Caco-2 (cell line): ENCODE measurements at regions of chr7 and their contacts with region 1.

Region 1: DNA sequence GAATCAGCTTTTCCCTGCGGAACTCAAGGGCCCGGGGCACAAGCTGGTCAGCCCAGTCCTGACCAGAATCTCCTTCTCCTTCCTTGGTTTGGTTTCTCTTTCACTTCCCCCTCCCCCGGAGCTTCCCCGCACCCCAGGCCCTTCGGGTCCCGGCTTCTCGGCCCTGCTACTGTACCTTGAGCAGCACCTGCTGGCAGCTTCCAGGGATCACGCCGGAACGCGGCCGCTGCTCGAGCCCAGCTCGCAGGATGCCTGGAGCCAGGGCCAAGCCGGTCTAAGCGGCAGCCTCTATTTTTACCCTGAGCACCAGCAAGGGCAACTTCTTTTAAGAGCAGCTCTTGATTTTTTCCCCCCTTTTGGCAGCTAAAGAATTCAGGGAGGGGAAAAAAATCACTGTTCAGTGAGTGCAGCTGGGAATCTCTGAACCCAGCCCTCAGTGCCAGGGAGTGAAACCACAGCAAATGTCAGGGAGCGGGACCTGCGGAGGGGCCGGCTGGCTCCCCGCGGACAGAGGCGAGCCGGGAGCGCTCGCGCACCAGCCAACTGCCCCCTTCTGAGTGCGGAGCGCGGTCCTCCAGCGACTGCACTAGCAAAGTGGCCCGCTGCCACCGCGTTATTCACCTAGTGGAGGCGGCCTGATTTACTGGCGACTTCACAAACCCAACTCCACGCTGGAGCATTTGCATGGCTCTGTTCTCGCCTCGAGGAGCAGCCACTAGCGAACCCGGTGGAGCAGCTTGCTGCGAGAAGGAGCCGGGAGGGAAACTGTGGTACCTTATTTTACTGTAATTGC is 2.4 kb upstream of the INHBA start:
- DNase-seq: peak; percentile 90 to 91
- H3K4me3 ChIP-seq: peak overlapping the region; percentile 43
- H3K4me3 Mint-ChIP-seq: peak overlapping the region; percentile 78
- H3K27ac Mint-ChIP-seq: no peak overlapping the region
- H3K4me1 ChIP-seq: no peaks in the 10 kb centered on the region
- H3K4me1 Mint-ChIP-seq: peaks cover 14% of the 10 kb centered on the region
- H3K27me3 ChIP-seq: no peaks in the 10 kb centered on the region
- H3K27me3 Mint-ChIP-seq: peaks cover 3% of the 10 kb centered on the region
- CTCF ChIP-seq: peak; percentile 79 to 94

Region 2: GRCh38 chr7:41003031-41003925 is 702.0 kb before region 1 on chr7:
- CTCF ChIA-PET with region 1: interaction called, 5 read pairs
- POLR2A ChIA-PET with region 1: no interaction called
- intact Hi-C with region 1: loop called (anchors 2 kb)
- DNase-seq: peak; percentile 69 to 75
- H3K4me3 ChIP-seq: no peak overlapping the region
- H3K4me3 Mint-ChIP-seq: peak overlapping the region; percentile 45
- H3K27ac Mint-ChIP-seq: peak overlapping the region; percentile 88
- H3K4me1 ChIP-seq: peaks cover 36% of the 10 kb centered on the region
- H3K4me1 Mint-ChIP-seq: peaks cover 23% of the 10 kb centered on the region
- H3K27me3 ChIP-seq: no peaks in the 10 kb centered on the region
- H3K27me3 Mint-ChIP-seq: no peaks in the 10 kb centered on the region
- CTCF ChIP-seq: peak; percentile 70 to 85

Region 3: GRCh38 chr7:41045556-41046123 is 659.7 kb before region 1 on chr7:
- CTCF ChIA-PET with region 1: no interaction called
- POLR2A ChIA-PET with region 1: no interaction called
- intact Hi-C with region 1: loop called (anchors 1 kb)
- DNase-seq: peak; percentile 42 to 46
- H3K4me3 ChIP-seq: no peak overlapping the region
- H3K4me3 Mint-ChIP-seq: no peak overlapping the region
- H3K27ac Mint-ChIP-seq: no peak overlapping the region
- H3K4me1 ChIP-seq: no peaks in the 10 kb centered on the region
- H3K4me1 Mint-ChIP-seq: peaks cover 23% of the 10 kb centered on the region
- H3K27me3 ChIP-seq: no peaks in the 10 kb centered on the region
- H3K27me3 Mint-ChIP-seq: no peaks in the 10 kb centered on the region
- CTCF ChIP-seq: peak in 1 of 2 experiments; percentile 55

Region 4: GRCh38 chr7:41097501-41097900 is 607.8 kb before region 1 on chr7:
- CTCF ChIA-PET with region 1: no interaction called
- POLR2A ChIA-PET with region 1: no interaction called
- intact Hi-C with region 1: no loop called
- DNase-seq: no peak
- H3K4me3 ChIP-seq: no peak overlapping the region
- H3K4me3 Mint-ChIP-seq: no peak overlapping the region
- H3K27ac Mint-ChIP-seq: no peak overlapping the region
- H3K4me1 ChIP-seq: 0 out of 2 replicates have a peak, but pooled peaks cover under 1% of the 10 kb centered on the region
- H3K4me1 Mint-ChIP-seq: peaks cover under 1% of the 10 kb centered on the region
- H3K27me3 ChIP-seq: no peaks in the 10 kb centered on the region
- H3K27me3 Mint-ChIP-seq: no peaks in the 10 kb centered on the region
- CTCF ChIP-seq: no peak